Spleen (tissue), 13 donors: ENCODE measurements at regions of chr7 and their contacts with region 1.

Region 1: GRCh38 chr7:74417419-74417971 is 36.2 kb upstream of the GTF2IRD1 start:
- DNase-seq: peak; percentile 87
- H3K4me3 ChIP-seq: no peak overlapping the region
- H3K27ac ChIP-seq: no peak overlapping the region
- H3K4me1 ChIP-seq: peaks cover 0 to 5% (median 3%) of the 10 kb centered on the region in 6 donors
- H3K27me3 ChIP-seq: no peaks in the 10 kb centered on the region
- CTCF ChIP-seq: peak; percentile 85 to 95 (median 91)
- POLR2A ChIP-seq: no peak

Region 2: GRCh38 chr7:75048435-75049379 is 631.2 kb after region 1 on chr7:
- intact Hi-C with region 1: loop called (anchors 10 kb)
- DNase-seq: no peak
- H3K4me3 ChIP-seq: no peak overlapping the region
- H3K27ac ChIP-seq: no peak overlapping the region
- H3K4me1 ChIP-seq: no peaks in the 10 kb centered on the region
- H3K27me3 ChIP-seq: no peaks in the 10 kb centered on the region
- CTCF ChIP-seq: no peak
- POLR2A ChIP-seq: no peak